ENCODE measurements at regions of chrX and their contacts with region 1.

Region 1: GRCh38 chrX:123450221-123450620 is 266.1 kb downstream of the GRIA3 start:
- DNase-seq: no peak
- ATAC-seq: peak; percentile 63
- H3K4me3 ChIP-seq: no peak overlapping the region
- H3K27ac ChIP-seq: no peak overlapping the region
- H3K4me1 ChIP-seq: no peaks in the 10 kb centered on the region; the same call in 1 of the 2 replicates
- H3K27me3 ChIP-seq: no peaks in the 10 kb centered on the region
- CTCF ChIP-seq: peak; percentile 44 to 47 (median 47); a peak in 5 of 6 replicates
- EP300 ChIP-seq: no peak
- POLR2A ChIP-seq: no peak
- RAD21 ChIP-seq: peak; percentile 68

Region 2: GRCh38 chrX:123590842-123591491 is 140.7 kb after region 1 on chrX:
- CTCF ChIA-PET with region 1: interaction called, 4 read pairs
- POLR2A ChIA-PET with region 1: no interaction called
- RAD21 ChIA-PET with region 1: interaction called, 3 read pairs
- SMC1A ChIA-PET with region 1: no interaction called
- in situ Hi-C with region 1: no loop called
- intact Hi-C with region 1: loop called (anchors 5 kb)
- DNase-seq: peak; percentile 24
- ATAC-seq: peak; percentile 87
- H3K4me3 ChIP-seq: no peak overlapping the region
- H3K27ac ChIP-seq: no peak overlapping the region
- H3K4me1 ChIP-seq: no peaks in the 10 kb centered on the region; the same call in 1 of the 2 replicates
- H3K27me3 ChIP-seq: no peaks in the 10 kb centered on the region
- CTCF ChIP-seq: no peak
- EP300 ChIP-seq: no peak
- POLR2A ChIP-seq: no peak
- RAD21 ChIP-seq: no peak